ENCODE measurements at regions of chr2 and their contacts with region 1.

Region 1: GRCh38 chr2:39696838-39697237 is 31.1 kb downstream of the TMEM178A start:
- DNase-seq: peak; percentile 25
- H3K4me3 Mint-ChIP-seq: no peak overlapping the region
- H3K27ac Mint-ChIP-seq: no peak overlapping the region
- H3K4me1 Mint-ChIP-seq: peaks cover 14% of the 10 kb centered on the region
- H3K27me3 Mint-ChIP-seq: no peaks in the 10 kb centered on the region
- CTCF ChIP-seq: peak; percentile 45

Region 2: DNA sequence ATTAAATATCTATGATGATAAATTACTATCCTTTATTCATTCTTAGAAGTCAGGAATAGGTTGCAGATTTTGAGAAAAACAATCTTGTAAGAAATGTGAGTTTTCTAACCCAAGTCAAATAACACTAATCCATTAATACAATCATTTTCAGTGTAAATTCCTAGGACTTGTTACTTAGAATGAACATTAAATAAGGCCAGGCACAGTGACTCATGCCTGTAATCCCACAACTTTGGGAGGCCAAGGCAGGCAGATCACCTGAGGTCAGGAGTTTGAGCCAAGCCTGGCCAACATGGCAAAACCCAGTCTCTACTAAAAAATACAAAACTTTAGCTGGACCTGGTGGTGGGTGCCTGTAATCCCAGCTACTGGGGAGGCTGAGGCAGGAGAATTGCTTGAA is 407.2 kb before region 1 on chr2:
- CTCF ChIA-PET with region 1: no interaction called
- POLR2A ChIA-PET with region 1: no interaction called
- intact Hi-C with region 1: no loop called
- DNase-seq: peak; percentile 17
- H3K4me3 Mint-ChIP-seq: no peak overlapping the region
- H3K27ac Mint-ChIP-seq: no peak overlapping the region
- H3K4me1 Mint-ChIP-seq: no peaks in the 10 kb centered on the region
- H3K27me3 Mint-ChIP-seq: no peaks in the 10 kb centered on the region
- CTCF ChIP-seq: no peak

Region 3: DNA sequence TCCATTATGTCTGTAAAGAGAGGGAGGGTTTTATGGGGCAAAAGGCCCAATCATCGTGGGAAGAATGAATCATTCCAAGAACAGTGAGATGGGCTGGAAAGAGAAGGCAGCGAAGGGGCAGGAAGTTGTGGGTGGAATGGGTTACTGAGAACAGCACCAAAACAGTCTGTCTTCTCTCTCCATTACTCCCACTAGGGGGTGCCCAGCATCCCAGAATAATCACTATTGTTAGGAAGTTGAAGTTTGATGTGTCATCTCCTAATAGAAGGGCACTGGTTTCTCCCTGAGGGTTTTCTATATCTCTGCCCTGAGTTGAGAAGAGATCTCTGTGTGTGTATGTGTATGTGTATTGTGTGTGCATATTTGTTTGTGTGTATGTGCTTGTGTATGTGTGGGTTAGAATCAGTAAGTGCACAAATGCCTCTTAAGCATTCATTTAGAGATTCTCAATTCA is 183.2 kb before region 1 on chr2:
- CTCF ChIA-PET with region 1: interaction called, 116 read pairs
- POLR2A ChIA-PET with region 1: interaction called, 11 read pairs
- intact Hi-C with region 1: loop called (anchors 1 kb)
- DNase-seq: peak; percentile 92
- H3K4me3 Mint-ChIP-seq: no peak overlapping the region
- H3K27ac Mint-ChIP-seq: peak overlapping the region; percentile 90
- H3K4me1 Mint-ChIP-seq: peaks cover 30% of the 10 kb centered on the region
- H3K27me3 Mint-ChIP-seq: no peaks in the 10 kb centered on the region
- CTCF ChIP-seq: peak; percentile 55

Region 4: DNA sequence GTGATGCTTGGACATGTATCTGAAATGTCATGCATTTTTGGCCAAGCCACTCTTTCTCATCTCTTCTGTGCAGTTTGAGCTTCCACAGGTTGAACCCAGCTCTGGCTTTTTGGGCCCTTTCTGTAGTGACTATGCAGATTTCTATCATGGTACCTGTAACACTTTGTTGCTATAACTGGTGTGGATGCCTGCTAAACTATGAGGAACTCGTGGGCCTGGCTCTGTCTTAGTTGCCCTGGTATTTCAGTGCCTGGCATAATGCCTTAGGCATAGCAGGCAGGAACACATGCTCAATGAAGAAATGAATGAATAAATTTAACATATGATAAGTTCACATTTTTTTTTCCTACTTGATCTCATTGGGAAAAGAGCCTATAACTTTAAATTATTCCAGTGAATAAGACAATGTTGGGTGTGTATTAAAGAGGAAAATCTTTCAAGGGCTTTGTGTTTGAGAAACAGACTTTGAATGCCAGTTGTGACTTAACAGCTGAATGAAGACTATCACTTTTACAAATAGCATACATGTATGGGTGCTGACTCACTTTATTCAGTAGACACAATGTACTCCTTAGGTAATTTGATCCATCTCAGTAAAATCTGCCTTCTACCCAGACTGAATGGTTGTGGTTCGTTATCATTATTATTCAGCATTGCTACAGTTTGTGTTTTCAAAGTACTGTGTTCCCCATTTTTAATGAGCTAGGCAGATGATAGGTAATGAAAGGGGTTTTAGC is 173.4 kb before region 1 on chr2:
- CTCF ChIA-PET with region 1: interaction called, 116 read pairs
- POLR2A ChIA-PET with region 1: no interaction called
- intact Hi-C with region 1: no loop called
- DNase-seq: peak; percentile 82
- H3K4me3 Mint-ChIP-seq: peak overlapping the region; percentile 59
- H3K27ac Mint-ChIP-seq: peak overlapping the region; percentile 96
- H3K4me1 Mint-ChIP-seq: peaks cover 49% of the 10 kb centered on the region
- H3K27me3 Mint-ChIP-seq: no peaks in the 10 kb centered on the region
- CTCF ChIP-seq: no peak

Region 5: DNA sequence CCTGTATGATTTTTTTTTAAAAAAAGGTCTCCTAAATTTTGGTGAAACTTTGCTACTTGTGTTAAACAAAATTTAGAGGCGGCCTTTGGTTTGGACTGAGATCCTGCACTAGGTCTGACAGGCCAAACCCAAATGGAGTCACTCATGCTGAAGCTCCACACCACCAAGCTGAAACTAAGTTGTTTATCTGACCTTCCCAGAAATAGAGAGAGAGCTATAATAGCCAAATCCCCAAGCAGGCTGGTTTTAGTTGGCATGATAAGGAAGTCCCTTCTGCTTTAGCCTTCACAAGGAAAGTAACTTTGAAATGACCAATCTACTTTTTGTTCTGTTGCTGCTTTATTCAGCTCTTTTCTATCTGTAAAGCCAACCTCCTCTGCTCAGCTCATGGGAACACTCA is 99.3 kb after region 1 on chr2:
- CTCF ChIA-PET with region 1: no interaction called
- POLR2A ChIA-PET with region 1: no interaction called
- intact Hi-C with region 1: no loop called
- DNase-seq: no peak
- H3K4me3 Mint-ChIP-seq: no peak overlapping the region
- H3K27ac Mint-ChIP-seq: no peak overlapping the region
- H3K4me1 Mint-ChIP-seq: no peaks in the 10 kb centered on the region
- H3K27me3 Mint-ChIP-seq: no peaks in the 10 kb centered on the region
- CTCF ChIP-seq: no peak